Gastrocnemius medialis (tissue), 4 donors: ENCODE measurements at regions of chr3 and their contacts with region 1.

Region 1: GRCh38 chr3:46488735-46489361 is 8.9 kb upstream of the RTP3 start:
- DNase-seq: peak; percentile 87 to 90
- ATAC-seq: peak; percentile 49 to 63
- H3K4me3 ChIP-seq: no peak overlapping the region
- H3K27ac ChIP-seq: peak overlapping the region; percentile 83 to 86 (median 86)
- H3K4me1 ChIP-seq: peaks cover 34 to 35% of the 10 kb centered on the region in 2 donors
- H3K27me3 ChIP-seq: no peaks in the 10 kb centered on the region
- CTCF ChIP-seq: peak; percentile 94 to 99 (median 98)
- POLR2A ChIP-seq: no peak

Region 2: DNA sequence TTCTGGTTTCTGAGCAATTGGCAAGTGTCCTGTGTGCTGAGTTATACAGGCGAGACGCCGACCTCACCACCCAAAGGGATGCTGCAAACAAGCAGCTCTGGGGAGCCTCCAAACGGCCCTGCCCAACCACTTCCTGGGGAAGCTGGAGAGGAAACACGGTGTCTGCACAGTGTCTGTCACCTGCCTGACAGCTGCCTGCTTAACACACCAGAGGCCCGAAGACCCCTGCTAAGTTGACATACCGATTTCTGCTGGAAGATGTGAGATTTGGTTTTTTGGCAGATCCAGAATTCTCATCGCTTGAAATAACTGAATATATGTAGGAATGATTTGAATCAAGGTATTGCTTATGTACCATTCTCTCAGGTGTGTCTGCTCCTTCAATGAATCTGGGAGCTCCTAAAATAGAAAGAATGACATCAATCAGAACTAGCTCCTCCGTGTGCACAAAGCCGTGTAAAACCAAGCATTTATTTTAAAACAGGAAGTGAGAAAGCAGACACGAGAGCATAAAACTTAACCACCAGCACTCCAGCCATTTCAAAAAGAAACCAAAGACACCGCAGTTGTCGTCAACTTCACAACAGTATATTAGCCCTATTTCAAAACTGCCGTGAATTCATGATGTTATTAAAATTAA is 50.1 kb after region 1 on chr3:
- in situ Hi-C with region 1: no loop called
- intact Hi-C with region 1: no loop called
- DNase-seq: peak in 1 of 2 donors; percentile 36
- ATAC-seq: no peak
- H3K4me3 ChIP-seq: no peak overlapping the region
- H3K27ac ChIP-seq: peak overlapping the region; percentile 78 to 89 (median 82)
- H3K4me1 ChIP-seq: peaks cover 21 to 35% of the 10 kb centered on the region in 2 donors
- H3K27me3 ChIP-seq: no peaks in the 10 kb centered on the region
- CTCF ChIP-seq: no peak
- POLR2A ChIP-seq: no peak

Region 3: GRCh38 chr3:46558184-46559043 is 69.6 kb after region 1 on chr3:
- in situ Hi-C with region 1: loop called in 1 of 4 experiments (anchors 5 kb)
- intact Hi-C with region 1: loop called (anchors 1 kb)
- DNase-seq: peak; percentile 85 to 88
- ATAC-seq: peak; percentile 78 to 88
- H3K4me3 ChIP-seq: peak overlapping the region; percentile 36 to 48 (median 46)
- H3K27ac ChIP-seq: peak overlapping the region; percentile 94 to 99 (median 97)
- H3K4me1 ChIP-seq: peaks cover 64 to 78% of the 10 kb centered on the region in 2 donors
- H3K27me3 ChIP-seq: no peaks in the 10 kb centered on the region
- CTCF ChIP-seq: peak; percentile 61 to 85 (median 65)
- POLR2A ChIP-seq: peak in 1 of 2 donors; percentile 60

Region 4: DNA sequence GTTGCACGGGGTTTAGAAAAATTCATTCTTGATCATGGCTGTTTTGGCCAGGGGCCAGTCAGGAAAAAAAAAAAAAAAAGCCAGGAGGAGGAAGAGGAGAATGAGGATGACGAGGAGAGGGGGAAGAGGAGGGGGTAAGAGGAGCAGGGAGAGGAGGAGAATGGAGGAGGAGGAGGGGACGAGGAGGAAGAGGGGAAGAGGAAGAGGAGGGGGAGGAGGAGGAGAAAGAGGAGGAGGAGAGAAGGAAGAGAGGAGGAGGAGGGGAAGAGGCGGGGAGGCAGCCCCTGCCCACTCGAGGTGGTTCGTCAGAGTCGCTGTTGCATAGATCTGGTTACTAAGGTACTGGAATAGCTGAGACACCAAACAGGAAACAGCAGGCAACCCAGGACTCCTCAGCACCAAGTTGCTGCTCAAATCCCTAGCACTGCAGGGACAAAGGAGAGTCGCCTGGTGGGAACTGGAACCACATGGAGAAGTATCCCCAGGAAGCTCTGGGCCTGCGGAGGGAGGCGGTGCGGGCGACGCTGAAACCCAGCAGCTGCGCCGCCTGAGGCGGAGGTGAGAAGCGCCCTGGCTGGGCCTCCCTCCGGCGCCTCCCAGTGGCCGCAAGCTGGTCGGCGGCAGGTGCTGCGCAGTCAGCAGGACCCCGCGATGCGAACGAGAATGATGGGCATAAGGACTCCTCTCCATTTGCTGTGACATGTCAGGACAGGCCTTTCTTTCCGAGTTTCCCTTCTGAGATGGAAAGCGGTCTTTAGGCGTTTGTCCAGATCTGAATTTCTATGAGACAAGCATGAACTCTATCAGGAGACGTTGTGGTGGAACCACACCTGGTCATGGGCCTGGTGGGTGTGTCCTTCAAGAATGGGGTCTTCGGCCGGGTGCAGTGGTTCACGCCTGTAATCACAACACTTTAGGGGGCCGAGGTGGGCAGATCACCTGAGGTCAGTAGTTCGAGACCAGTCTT is 141.0 kb after region 1 on chr3:
- in situ Hi-C with region 1: loop called (anchors 5 to 10 kb)
- intact Hi-C with region 1: loop called (anchors 1 kb)
- DNase-seq: peak; percentile 60 to 75
- ATAC-seq: peak; percentile 83 to 91
- H3K4me3 ChIP-seq: peak overlapping the region; percentile 18 to 42 (median 30)
- H3K27ac ChIP-seq: peak overlapping the region; percentile 64 to 80 (median 73)
- H3K4me1 ChIP-seq: peaks cover 13 to 19% of the 10 kb centered on the region in 2 donors
- H3K27me3 ChIP-seq: no peaks in the 10 kb centered on the region
- CTCF ChIP-seq: peak; percentile 90 to 100 (median 99)
- POLR2A ChIP-seq: no peak

Region 5: DNA sequence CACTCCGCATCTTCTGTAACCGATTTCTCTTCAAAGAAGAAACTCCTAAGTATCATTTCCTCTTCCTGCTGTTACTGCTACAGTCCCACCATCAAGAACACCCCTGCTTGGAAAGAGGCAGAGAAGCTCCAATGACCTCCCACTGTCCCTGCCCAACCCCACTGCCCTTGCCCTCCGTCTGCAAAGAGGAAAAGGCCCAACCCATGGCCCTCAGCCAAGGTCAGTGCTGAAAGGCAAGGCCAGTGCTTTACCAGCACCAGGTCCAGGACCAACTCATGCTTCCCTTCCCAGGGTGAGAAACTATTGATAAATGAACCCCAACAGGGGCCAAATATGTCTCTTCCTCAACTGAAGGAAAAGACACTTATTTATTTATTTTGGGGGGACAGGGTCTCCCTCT is 146.0 kb after region 1 on chr3:
- in situ Hi-C with region 1: loop called in 2 of 4 experiments (anchors 5 to 10 kb)
- intact Hi-C with region 1: loop called (anchors 1 kb)
- DNase-seq: no peak
- ATAC-seq: no peak
- H3K4me3 ChIP-seq: no peak overlapping the region
- H3K27ac ChIP-seq: no peak overlapping the region
- H3K4me1 ChIP-seq: peaks cover 4 to 6% of the 10 kb centered on the region in 2 donors
- H3K27me3 ChIP-seq: no peaks in the 10 kb centered on the region
- CTCF ChIP-seq: no peak
- POLR2A ChIP-seq: no peak